ENCODE measurements at regions of chr18 and their contacts with region 1.

Region 1: DNA sequence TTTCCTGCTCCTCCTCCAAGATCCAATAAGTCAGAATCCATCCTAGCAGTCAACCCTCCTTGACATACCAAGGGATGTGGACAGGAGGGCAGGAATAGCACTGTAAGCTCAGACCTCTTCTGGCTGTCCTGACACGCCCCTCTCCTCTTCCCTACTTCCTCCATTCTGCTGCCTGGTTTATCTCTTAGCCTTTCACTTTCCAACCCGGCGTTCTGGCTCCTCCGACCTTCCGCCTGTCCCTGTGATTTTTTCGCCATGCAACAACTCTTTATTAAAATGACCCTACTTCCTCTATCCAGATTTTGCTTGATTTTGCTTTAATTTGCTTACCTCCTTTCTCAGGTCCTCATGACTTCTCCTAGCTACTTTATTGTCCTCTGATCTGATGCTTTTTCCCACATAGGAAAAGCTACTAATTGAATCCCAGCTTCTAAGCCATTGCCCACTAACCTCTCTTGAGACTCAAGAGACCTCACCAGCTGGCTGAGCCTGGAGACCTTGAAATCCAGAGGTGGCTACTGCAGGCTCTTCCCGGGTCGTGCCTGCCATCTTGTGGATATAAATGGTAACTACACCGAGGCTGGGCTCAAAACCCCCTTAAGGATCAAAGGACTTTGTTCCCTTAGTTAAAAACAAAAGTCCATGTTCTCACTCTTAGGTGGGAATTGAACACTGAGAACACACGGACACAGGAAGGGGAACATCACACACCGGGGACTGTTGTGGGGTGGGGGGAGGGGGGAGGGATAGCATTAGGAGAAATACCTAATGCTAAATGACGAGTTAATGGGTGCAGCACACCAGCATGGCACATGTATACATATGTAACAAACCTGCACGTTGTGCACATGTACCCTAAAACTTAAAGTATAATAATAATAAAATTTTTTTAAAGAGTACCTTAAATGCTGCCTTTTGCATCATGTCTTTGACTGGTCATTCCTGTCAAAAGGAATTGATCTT is 139.4 kb downstream of the AKAIN1 start:
- DNase-seq: peak; percentile 32
- ATAC-seq: peak; percentile 79
- H3K4me3 ChIP-seq: no peak overlapping the region
- H3K27ac ChIP-seq: no peak overlapping the region
- H3K4me1 ChIP-seq: no peaks in the 10 kb centered on the region; the same call in 1 of the 2 replicates
- H3K27me3 ChIP-seq: no peaks in the 10 kb centered on the region
- CTCF ChIP-seq: peak; percentile 72 to 93 (median 74); a peak in 4 of 6 replicates
- EP300 ChIP-seq: no peak
- POLR2A ChIP-seq: no peak
- RAD21 ChIP-seq: peak; percentile 92

Region 2: DNA sequence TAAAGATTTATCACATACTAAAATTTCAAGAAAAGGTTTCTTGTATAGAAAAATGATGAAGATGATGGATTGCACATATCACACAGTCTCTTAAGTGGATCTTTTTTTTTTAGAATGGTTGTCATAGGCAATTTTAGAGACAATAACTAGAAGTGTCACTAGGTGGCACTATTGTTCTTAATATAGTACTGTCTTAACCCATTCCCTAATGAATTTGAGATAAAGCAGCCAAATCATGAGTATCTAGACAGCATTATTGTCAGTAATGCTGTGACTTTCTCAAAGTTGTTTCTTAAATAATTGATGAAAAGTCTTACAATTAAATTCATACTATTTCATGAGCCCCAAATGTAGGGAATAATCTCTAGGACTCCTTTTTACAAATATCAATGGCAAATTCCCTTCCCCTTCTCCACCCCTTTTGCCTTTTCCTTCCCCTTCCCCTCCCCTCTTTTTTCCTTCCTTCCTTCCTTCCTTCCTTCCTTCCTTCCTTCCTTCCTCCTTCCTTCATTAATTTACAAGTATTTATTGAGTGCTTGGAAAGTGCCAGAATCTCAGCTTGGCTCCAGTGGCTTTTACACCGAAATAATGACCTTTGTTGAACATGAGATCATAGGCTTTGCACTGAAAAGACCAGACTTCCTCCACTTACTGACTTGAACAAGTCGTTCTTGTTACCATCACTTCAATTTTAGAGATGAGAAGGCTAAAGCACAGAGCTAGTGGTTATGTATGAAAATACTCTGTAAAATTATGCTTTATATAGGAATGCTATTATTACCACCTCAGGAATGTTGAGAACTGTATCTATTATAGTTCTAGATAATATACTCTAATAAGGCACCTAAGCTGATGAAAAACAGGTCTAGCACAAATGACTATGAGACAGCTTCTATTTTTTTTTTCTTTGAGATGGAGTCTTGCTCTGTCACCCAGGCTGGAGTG is 1775.9 kb before region 1 on chr18:
- CTCF ChIA-PET with region 1: interaction called, 5 read pairs
- POLR2A ChIA-PET with region 1: no interaction called
- RAD21 ChIA-PET with region 1: interaction called, 5 read pairs
- SMC1A ChIA-PET with region 1: interaction called, 3 read pairs
- in situ Hi-C with region 1: loop called (anchors 10 kb)
- intact Hi-C with region 1: no loop called
- DNase-seq: no peak
- ATAC-seq: peak; percentile 69
- H3K4me3 ChIP-seq: no peak overlapping the region
- H3K27ac ChIP-seq: no peak overlapping the region
- H3K4me1 ChIP-seq: peaks cover 24% of the 10 kb centered on the region
- H3K27me3 ChIP-seq: no peaks in the 10 kb centered on the region
- CTCF ChIP-seq: peak; percentile 35 to 66 (median 46); a peak in 4 of 6 replicates
- EP300 ChIP-seq: no peak
- POLR2A ChIP-seq: no peak
- RAD21 ChIP-seq: peak; percentile 75

Region 3: GRCh38 chr18:4004183-4004829 is 1053.4 kb before region 1 on chr18:
- CTCF ChIA-PET with region 1: interaction called, 8 read pairs
- POLR2A ChIA-PET with region 1: no interaction called
- RAD21 ChIA-PET with region 1: interaction called, 3 read pairs
- SMC1A ChIA-PET with region 1: interaction called, 3 read pairs
- in situ Hi-C with region 1: loop called (anchors 10 kb)
- intact Hi-C with region 1: no loop called
- DNase-seq: no peak
- ATAC-seq: peak; percentile 83
- H3K4me3 ChIP-seq: no peak overlapping the region
- H3K27ac ChIP-seq: no peak overlapping the region
- H3K4me1 ChIP-seq: no peaks in the 10 kb centered on the region
- H3K27me3 ChIP-seq: no peaks in the 10 kb centered on the region
- CTCF ChIP-seq: peak in 1 of 3 experiments; percentile 27; a peak in 1 of 6 replicates
- EP300 ChIP-seq: peak in 1 of 2 experiments; percentile 46; a peak in 1 of 4 replicates
- POLR2A ChIP-seq: no peak
- RAD21 ChIP-seq: no peak

Region 4: DNA sequence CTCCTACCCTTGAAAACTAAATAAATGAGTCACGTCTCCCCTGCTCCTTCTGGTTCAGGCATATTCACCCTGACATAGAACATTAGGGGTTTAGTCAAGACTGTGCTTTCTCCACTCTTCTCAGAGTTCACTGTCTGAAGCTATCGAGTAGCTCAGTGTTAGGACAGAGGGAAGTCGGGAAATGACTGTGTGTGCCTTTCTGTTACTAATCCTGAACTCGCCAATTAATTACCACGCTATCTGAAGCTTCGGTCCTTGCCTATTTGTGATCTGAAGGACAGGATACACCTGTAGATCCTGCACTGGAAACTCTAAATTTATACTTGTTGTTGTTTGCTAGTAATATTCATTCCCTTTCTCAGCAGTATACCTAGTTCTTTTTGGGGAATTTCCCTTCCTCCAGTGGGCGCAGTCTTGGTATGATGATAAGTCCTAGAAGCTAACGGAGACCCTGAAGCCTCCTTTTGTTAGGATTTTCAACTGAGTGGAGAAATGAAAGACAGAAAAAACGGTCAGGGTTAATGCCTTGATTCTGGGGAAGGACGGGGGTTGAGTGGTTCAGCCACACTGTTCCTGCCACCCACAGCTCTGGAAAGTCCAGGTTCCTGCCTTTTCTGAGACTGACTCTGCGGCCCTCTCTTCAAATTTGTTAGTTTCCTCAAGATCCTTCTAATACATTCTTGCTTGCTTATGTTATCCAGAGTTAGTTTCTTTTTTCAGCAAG is 820.6 kb before region 1 on chr18:
- CTCF ChIA-PET with region 1: no interaction called
- POLR2A ChIA-PET with region 1: no interaction called
- RAD21 ChIA-PET with region 1: no interaction called
- SMC1A ChIA-PET with region 1: no interaction called
- in situ Hi-C with region 1: no loop called
- intact Hi-C with region 1: loop called (anchors 5 kb)
- DNase-seq: no peak
- ATAC-seq: peak; percentile 77
- H3K4me3 ChIP-seq: no peak overlapping the region
- H3K27ac ChIP-seq: no peak overlapping the region
- H3K4me1 ChIP-seq: no peaks in the 10 kb centered on the region
- H3K27me3 ChIP-seq: no peaks in the 10 kb centered on the region
- CTCF ChIP-seq: no peak
- EP300 ChIP-seq: peak; percentile 28 to 41; a peak in 1 of 4 replicates
- POLR2A ChIP-seq: no peak
- RAD21 ChIP-seq: no peak

Region 5: DNA sequence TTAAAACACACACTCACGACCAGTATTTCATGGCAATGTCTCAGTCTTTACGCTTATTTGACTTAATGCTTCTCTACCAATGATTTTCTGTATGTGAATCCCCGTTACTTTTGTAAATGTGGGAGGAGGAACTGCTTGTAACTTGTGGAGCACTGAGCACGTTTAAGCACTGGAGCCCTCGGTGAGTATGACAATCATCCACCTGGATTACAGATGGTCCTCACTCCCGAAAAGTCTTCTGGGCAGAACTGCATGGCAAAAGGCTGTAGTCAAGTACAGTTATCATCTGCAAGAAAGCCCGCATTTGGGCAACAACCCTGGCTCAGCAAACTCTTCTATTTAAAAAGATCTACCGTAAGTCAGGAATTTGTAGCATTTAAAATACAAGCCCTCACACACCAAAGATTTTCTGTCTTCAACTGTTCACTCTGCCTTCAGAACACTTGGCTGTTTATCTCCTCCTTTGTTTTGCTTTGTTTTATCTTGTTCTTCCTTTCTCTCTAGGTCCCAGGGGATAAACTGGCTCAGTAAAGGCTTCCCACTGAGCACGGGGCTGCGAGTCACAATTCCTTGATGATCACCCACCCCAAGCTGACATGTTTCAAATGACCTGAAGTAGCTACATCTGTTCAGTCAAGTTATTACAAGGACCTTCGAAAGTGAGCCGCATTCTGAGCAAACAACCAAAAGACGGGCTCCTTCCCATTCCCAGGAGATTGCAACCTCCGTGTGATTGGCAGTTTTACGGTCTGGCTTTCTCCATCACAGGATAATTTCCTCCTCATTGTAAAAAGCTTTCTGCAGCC is 704.7 kb before region 1 on chr18:
- CTCF ChIA-PET with region 1: no interaction called
- POLR2A ChIA-PET with region 1: no interaction called
- RAD21 ChIA-PET with region 1: no interaction called
- SMC1A ChIA-PET with region 1: interaction called, 3 read pairs
- in situ Hi-C with region 1: no loop called
- intact Hi-C with region 1: loop called (anchors 10 kb)
- DNase-seq: no peak
- ATAC-seq: peak; percentile 8
- H3K4me3 ChIP-seq: no peak overlapping the region
- H3K27ac ChIP-seq: no peak overlapping the region
- H3K4me1 ChIP-seq: no peaks in the 10 kb centered on the region
- H3K27me3 ChIP-seq: no peaks in the 10 kb centered on the region
- CTCF ChIP-seq: no peak
- EP300 ChIP-seq: no peak
- POLR2A ChIP-seq: no peak
- RAD21 ChIP-seq: no peak

Region 6: GRCh38 chr18:4551001-4551360 is 506.7 kb before region 1 on chr18:
- CTCF ChIA-PET with region 1: no interaction called
- POLR2A ChIA-PET with region 1: no interaction called
- RAD21 ChIA-PET with region 1: no interaction called
- SMC1A ChIA-PET with region 1: no interaction called
- in situ Hi-C with region 1: no loop called
- intact Hi-C with region 1: loop called (anchors 5 kb)
- DNase-seq: no peak
- ATAC-seq: no peak; the same call in 2 of the 3 replicates
- H3K4me3 ChIP-seq: no peak overlapping the region
- H3K27ac ChIP-seq: no peak overlapping the region
- H3K4me1 ChIP-seq: no peaks in the 10 kb centered on the region
- H3K27me3 ChIP-seq: no peaks in the 10 kb centered on the region
- CTCF ChIP-seq: no peak
- EP300 ChIP-seq: no peak
- POLR2A ChIP-seq: no peak
- RAD21 ChIP-seq: no peak

Region 7: GRCh38 chr18:5073026-5073944 is 15.6 kb after region 1 on chr18:
- CTCF ChIA-PET with region 1: interaction called, 11 read pairs
- POLR2A ChIA-PET with region 1: no interaction called
- RAD21 ChIA-PET with region 1: no interaction called
- SMC1A ChIA-PET with region 1: interaction called, 8 read pairs
- in situ Hi-C with region 1: no loop called
- intact Hi-C with region 1: no loop called
- DNase-seq: no peak
- ATAC-seq: peak; percentile 88
- H3K4me3 ChIP-seq: no peak overlapping the region
- H3K27ac ChIP-seq: no peak overlapping the region
- H3K4me1 ChIP-seq: no peaks in the 10 kb centered on the region
- H3K27me3 ChIP-seq: no peaks in the 10 kb centered on the region
- CTCF ChIP-seq: peak; percentile 52 to 90 (median 65)
- EP300 ChIP-seq: no peak
- POLR2A ChIP-seq: no peak
- RAD21 ChIP-seq: peak; percentile 81

Region 8: GRCh38 chr18:5380586-5380985 is 322.9 kb after region 1 on chr18:
- CTCF ChIA-PET with region 1: no interaction called
- POLR2A ChIA-PET with region 1: no interaction called
- RAD21 ChIA-PET with region 1: no interaction called
- SMC1A ChIA-PET with region 1: no interaction called
- in situ Hi-C with region 1: no loop called
- intact Hi-C with region 1: no loop called
- DNase-seq: no peak
- ATAC-seq: no peak
- H3K4me3 ChIP-seq: no peak overlapping the region
- H3K27ac ChIP-seq: no peak overlapping the region
- H3K4me1 ChIP-seq: no peaks in the 10 kb centered on the region
- H3K27me3 ChIP-seq: peaks cover 0 to 1% of the 10 kb centered on the region in 2 experiments; a peak in 1 of 4 replicates
- CTCF ChIP-seq: no peak
- EP300 ChIP-seq: no peak
- POLR2A ChIP-seq: no peak
- RAD21 ChIP-seq: no peak

Measured in GM12878 (cell line).